Mammary epithelial cell (primary cell): ENCODE measurements at regions of chr3 and their contacts with region 1.

Region 1: DNA sequence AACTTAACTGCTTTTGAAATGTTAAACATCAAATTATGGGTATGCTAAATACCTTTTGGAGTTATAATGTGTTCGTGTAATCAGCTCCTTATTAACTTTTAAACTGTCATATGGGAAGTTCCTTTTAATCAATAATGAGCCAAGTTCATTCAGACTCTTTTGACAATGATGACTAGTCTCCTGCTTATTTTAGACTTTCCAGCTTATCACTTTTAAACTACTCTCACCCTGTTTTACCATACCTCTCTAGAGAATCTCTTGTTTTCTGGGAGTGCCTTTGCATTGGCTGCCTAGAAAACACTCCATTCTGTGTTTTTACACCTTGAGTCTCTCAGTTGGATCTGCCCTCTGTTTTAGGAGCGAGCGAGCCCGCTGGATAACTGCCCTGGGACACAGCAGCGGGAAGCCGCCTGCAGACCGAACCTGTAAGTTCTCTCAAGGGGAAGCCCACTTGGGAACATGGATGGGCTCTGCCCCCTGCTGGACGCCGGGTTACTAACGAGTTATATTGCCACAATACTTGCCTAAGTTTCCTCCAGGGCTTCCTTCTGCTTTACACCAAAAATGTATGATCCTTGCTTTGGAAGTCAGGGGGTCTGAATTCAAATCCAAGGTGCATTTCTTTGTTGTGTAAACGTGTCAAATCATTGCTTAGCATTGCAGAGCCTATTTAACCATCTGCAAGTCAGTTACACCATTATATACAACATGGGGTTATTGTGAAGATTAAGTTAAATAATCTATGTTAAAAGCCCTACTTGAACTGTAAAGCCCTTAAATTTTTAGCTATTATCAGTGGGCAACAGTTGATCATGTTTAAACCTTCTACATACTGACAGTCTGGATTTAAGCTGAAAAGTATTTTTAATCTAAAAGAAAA is 71.3 kb downstream of the DHX36 start:
- DNase-seq: peak; percentile 69
- H3K4me3 ChIP-seq: no peak overlapping the region
- H3K27ac ChIP-seq: no peak overlapping the region
- H3K4me1 ChIP-seq: no peaks in the 10 kb centered on the region
- H3K27me3 ChIP-seq: no peaks in the 10 kb centered on the region
- CTCF ChIP-seq: peak; percentile 92 to 96

Region 2: GRCh38 chr3:154040286-154040685 is 212.7 kb before region 1 on chr3:
- CTCF ChIA-PET with region 1: no interaction called
- dilution Hi-C with region 1: no loop called
- in situ Hi-C with region 1: no loop called
- intact Hi-C with region 1: loop called (anchors 1 kb)
- DNase-seq: peak; percentile 16
- H3K4me3 ChIP-seq: no peak overlapping the region
- H3K27ac ChIP-seq: no peak overlapping the region
- H3K4me1 ChIP-seq: no peaks in the 10 kb centered on the region
- H3K27me3 ChIP-seq: peaks cover 2% of the 10 kb centered on the region
- CTCF ChIP-seq: peak; percentile 34 to 53

Region 3: DNA sequence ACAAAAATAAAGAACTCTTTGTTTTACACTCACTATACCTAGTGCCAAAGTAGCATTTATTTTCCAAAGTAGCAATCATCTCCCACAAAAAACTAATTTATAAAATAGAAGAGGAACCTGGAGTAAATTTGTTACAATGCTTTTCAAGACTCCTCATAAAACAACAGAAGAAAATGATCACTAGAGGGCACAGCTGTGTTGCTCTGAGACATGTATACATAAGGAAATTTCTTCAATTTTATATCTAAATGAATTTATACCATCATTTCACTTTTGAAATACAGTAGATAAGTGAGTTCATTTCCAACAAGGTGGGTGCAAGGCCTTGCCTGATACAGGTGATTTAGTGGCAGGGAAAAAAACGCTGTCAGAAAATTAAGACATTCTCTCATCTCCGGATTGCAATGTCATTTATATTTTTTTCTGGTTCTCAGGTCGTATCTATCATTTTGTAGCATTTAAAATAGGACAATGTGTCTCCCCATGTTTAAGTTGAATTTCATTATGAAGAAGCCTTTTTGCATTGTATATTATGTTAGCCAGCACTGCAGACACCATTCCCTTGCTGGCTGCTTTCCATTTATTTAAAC is 157.1 kb before region 1 on chr3:
- CTCF ChIA-PET with region 1: no interaction called
- dilution Hi-C with region 1: loop called (anchors 25 kb)
- in situ Hi-C with region 1: loop called (anchors 5 kb)
- intact Hi-C with region 1: loop called (anchors 1 kb)
- DNase-seq: no peak
- H3K4me3 ChIP-seq: no peak overlapping the region
- H3K27ac ChIP-seq: no peak overlapping the region
- H3K4me1 ChIP-seq: no peaks in the 10 kb centered on the region
- H3K27me3 ChIP-seq: no peaks in the 10 kb centered on the region
- CTCF ChIP-seq: peak; percentile 25 to 54

Region 4: GRCh38 chr3:154235330-154235729 is 17.7 kb before region 1 on chr3:
- CTCF ChIA-PET with region 1: no interaction called
- dilution Hi-C with region 1: no loop called
- in situ Hi-C with region 1: no loop called
- intact Hi-C with region 1: loop called (anchors 1 kb)
- DNase-seq: peak; percentile 30
- H3K4me3 ChIP-seq: no peak overlapping the region
- H3K27ac ChIP-seq: no peak overlapping the region
- H3K4me1 ChIP-seq: no peaks in the 10 kb centered on the region
- H3K27me3 ChIP-seq: no peaks in the 10 kb centered on the region
- CTCF ChIP-seq: no peak